GM10248 (cell line): ENCODE measurements at regions of chr4 and their contacts with region 1.

Region 1: GRCh38 chr4:38675146-38676121 is 11.4 kb downstream of the KLF3 start:
- DNase-seq: peak; percentile 67
- CTCF ChIP-seq: peak; percentile 84

Region 2: DNA sequence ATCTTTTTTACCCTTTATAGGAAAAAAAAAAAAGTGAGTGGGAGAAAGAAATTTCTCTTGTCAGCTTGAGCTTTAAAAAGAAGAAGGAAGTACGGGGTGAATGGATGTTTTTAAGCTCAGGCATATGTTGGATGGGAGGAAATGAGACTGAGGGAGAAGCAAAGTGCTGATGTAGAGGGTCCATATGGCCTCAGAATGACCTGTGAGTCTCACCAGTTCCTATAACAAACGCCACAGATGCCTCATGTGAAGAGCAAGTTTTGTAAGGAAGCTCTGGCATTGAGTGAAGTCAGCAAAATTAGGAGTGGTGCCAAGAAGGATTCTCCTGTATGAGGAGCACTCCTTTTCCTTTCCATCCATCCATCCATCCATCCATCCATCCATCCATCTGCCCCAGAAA is 500.6 kb before region 1 on chr4:
- CTCF ChIA-PET with region 1: interaction called, 115 read pairs
- POLR2A ChIA-PET with region 1: no interaction called
- DNase-seq: no peak
- CTCF ChIP-seq: no peak

Region 3: DNA sequence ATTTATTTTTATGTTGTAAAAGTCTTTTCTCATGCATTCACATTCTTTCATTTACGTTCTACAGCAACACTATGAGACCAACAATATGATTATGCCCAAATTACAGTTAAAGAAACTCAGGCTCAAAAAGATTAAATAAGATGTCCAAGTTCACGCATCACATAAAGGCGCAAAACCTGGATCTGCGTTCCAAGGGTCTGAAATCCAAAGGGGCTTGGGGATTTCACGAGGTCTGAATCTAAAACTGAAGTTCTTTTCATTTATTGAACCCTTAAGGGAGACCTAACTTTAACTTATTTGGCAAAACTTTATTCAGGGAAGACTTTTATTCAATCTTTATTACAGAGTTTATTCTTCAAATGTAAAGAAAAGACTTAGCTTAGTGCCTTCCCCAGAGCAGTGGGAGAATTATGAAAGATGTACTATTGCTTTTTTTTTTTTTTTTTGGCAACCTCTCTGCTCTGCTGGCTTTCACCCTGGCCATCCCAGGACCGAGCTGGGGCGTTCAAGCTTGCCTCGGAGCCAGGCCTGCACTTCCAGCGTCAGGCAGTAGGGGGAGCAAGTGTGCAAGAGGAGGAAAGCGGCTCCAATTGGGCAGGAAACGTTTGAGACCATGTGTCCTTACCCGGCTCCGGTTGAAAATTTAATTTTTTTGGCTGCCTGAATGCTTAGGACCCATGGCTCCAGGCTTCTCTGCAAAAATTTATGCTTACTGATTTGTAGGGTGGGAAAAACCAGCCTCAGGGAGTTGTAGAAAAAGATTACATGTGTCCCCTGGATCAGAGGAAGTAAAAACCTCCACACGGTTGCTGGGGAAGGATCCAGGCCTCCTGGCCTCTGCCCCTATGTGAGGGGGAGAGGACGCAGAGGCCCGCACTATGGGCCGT is 355.7 kb before region 1 on chr4:
- CTCF ChIA-PET with region 1: interaction called, 50 read pairs
- POLR2A ChIA-PET with region 1: no interaction called
- DNase-seq: peak; percentile 85
- CTCF ChIP-seq: peak; percentile 98

Region 4: DNA sequence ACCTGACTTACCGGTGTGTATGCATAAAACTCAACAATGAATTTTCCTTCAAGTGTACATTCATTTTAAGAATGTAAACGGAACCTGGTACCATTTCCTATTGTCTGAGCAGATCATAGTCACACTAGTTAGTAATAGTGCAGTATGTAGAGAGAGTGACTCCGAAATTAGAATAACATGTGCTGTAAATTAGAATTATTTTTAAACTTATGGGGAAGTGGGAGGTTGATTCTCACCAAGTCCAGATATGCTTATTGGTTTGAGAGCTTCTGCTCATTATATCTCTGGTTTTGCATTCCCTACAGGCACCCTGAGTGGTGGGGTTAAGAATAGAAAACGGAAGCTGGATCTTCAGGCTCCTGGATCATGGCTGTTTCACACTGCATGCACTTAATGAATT is 28.2 kb after region 1 on chr4:
- CTCF ChIA-PET with region 1: interaction called, 28 read pairs
- POLR2A ChIA-PET with region 1: no interaction called
- DNase-seq: no peak
- CTCF ChIP-seq: no peak

Region 5: GRCh38 chr4:38805530-38806145 is 130.2 kb after region 1 on chr4:
- CTCF ChIA-PET with region 1: no interaction called
- POLR2A ChIA-PET with region 1: no interaction called
- DNase-seq: peak; percentile 74
- CTCF ChIP-seq: no peak

Region 6: GRCh38 chr4:39348371-39349315 is 673.2 kb after region 1 on chr4:
- CTCF ChIA-PET with region 1: no interaction called
- POLR2A ChIA-PET with region 1: no interaction called
- DNase-seq: no peak
- CTCF ChIP-seq: no peak